ENCODE measurements at regions of chr9 and their contacts with region 1.

Region 1: GRCh38 chr9:95127249-95128176 is 190.0 kb downstream of the FANCC start:
- DNase-seq: peak; percentile 88
- H3K4me3 ChIP-seq: peak overlapping the region; percentile 15 to 21
- H3K27ac ChIP-seq: peak overlapping the region; percentile 64
- H3K4me1 ChIP-seq: peaks cover 13% of the 10 kb centered on the region
- H3K27me3 ChIP-seq: no peaks in the 10 kb centered on the region
- CTCF ChIP-seq: peak; percentile 92 to 98 (median 96)
- POLR2A ChIP-seq: no peak

Region 2: DNA sequence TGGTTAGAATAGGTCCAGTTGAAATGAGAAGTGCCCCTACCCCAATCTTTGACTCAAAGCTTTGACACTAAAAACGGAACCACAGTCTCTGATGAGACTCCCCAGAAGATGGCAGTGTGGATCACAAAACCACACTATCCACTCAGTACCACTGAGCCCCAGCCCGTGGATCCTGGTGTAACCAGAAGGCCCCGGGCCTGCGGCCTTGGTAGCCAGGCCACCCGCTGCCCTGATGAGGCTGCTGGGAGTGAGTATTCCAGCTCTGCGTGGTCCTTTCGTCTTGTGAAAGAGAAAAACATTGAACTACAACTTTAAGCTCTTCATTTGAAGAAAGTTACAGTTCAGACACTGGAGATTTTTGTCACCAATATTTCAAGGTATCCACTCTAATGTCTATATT is 446.0 kb before region 1 on chr9:
- intact Hi-C with region 1: loop called (anchors 2 kb)
- DNase-seq: peak; percentile 70
- H3K4me3 ChIP-seq: no peak overlapping the region
- H3K27ac ChIP-seq: no peak overlapping the region
- H3K4me1 ChIP-seq: no peaks in the 10 kb centered on the region
- H3K27me3 ChIP-seq: no peaks in the 10 kb centered on the region
- CTCF ChIP-seq: peak in 3 of 4 experiments; percentile 72 to 82 (median 80)
- POLR2A ChIP-seq: no peak

Region 3: GRCh38 chr9:94783102-94783664 is 344.3 kb before region 1 on chr9:
- intact Hi-C with region 1: loop called (anchors 5 kb)
- DNase-seq: peak; percentile 96
- H3K4me3 ChIP-seq: no peak overlapping the region
- H3K27ac ChIP-seq: peak overlapping the region; percentile 22 to 23
- H3K4me1 ChIP-seq: no peaks in the 10 kb centered on the region
- H3K27me3 ChIP-seq: no peaks in the 10 kb centered on the region
- CTCF ChIP-seq: peak; percentile 31 to 86 (median 78)
- POLR2A ChIP-seq: no peak

Region 4: DNA sequence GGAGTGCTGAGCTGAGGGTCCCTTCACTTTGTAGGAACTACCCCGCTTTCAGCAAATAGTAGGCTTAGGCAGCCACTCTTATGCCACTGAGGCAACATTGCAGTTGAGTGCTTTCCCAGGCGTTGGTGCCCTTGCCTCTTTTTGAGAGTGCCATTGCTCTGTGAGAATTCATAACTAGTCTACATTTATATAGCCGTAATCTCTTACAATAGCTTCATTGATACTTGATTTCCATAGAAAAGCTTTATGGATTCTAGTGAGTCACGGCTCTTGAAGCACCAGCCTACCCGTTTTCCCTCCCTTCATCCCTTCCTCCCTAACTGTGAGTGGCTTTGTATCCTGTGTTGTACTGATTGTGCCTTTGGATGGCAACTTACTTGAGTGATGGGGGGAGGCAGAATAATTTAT is 117.1 kb before region 1 on chr9:
- intact Hi-C with region 1: loop called (anchors 5 kb)
- DNase-seq: no peak
- H3K4me3 ChIP-seq: no peak overlapping the region
- H3K27ac ChIP-seq: peak overlapping the region; percentile 94 to 96
- H3K4me1 ChIP-seq: peaks cover 3% of the 10 kb centered on the region
- H3K27me3 ChIP-seq: no peaks in the 10 kb centered on the region
- CTCF ChIP-seq: no peak
- POLR2A ChIP-seq: no peak

Region 5: DNA sequence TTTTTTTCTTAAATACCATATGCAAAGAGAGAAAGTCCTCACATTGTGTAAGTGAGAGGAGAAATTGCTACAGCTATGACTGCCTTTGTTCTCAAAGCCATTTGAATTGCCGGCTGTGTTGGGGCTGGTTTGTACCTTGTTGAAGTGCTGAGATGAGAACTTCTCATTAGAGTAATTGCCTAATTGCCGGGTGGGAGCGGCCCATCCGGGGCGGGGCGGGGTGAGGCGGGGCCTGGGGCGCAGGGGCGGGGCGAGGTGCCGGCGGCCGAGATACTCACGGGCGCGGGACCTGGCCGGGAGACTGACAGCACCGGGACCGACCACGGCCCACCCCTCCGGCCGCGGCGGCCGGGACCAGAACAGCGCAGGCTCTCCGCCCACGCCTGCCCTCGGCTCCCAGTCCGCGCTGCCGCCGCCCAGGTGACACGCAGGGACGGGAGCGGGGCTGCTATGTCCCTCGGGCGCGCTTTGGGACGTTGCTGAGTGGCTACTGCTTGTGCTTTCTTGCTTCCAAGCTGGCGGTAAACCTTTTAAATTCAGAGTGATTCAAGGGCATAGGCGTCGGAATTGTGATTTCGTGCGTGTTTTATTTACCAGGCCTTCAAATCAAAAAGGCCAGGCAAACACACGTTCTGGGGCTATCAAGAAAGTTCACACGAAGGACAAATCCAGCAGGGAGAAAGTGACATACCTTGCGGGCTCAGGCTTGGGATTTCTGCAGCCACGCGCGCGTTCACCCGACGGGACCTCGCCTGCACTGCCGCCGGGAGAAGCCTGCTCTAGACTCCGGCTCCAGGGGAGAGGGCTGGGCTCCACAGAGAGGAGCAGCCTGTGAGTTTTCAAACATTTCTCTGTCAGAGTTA is 79.1 kb before region 1 on chr9:
- intact Hi-C with region 1: loop called (anchors 10 kb)
- DNase-seq: peak; percentile 79
- H3K4me3 ChIP-seq: peak overlapping the region; percentile 42 to 47
- H3K27ac ChIP-seq: peak overlapping the region; percentile 86 to 89
- H3K4me1 ChIP-seq: no peaks in the 10 kb centered on the region
- H3K27me3 ChIP-seq: no peaks in the 10 kb centered on the region
- CTCF ChIP-seq: no peak
- POLR2A ChIP-seq: peak; percentile 88

Region 6: GRCh38 chr9:95092262-95093072 is 35.0 kb before region 1 on chr9:
- intact Hi-C with region 1: no loop called
- DNase-seq: no peak
- H3K4me3 ChIP-seq: no peak overlapping the region
- H3K27ac ChIP-seq: peak overlapping the region; percentile 77
- H3K4me1 ChIP-seq: peaks cover 31% of the 10 kb centered on the region
- H3K27me3 ChIP-seq: no peaks in the 10 kb centered on the region
- CTCF ChIP-seq: no peak
- POLR2A ChIP-seq: no peak

Region 7: GRCh38 chr9:95167998-95168397 is 40.5 kb after region 1 on chr9:
- intact Hi-C with region 1: loop called (anchors 5 kb)
- DNase-seq: peak; percentile 40
- H3K4me3 ChIP-seq: no peak overlapping the region
- H3K27ac ChIP-seq: no peak overlapping the region
- H3K4me1 ChIP-seq: no peaks in the 10 kb centered on the region
- H3K27me3 ChIP-seq: no peaks in the 10 kb centered on the region
- CTCF ChIP-seq: peak; percentile 63 to 77 (median 70)
- POLR2A ChIP-seq: no peak

Region 8: DNA sequence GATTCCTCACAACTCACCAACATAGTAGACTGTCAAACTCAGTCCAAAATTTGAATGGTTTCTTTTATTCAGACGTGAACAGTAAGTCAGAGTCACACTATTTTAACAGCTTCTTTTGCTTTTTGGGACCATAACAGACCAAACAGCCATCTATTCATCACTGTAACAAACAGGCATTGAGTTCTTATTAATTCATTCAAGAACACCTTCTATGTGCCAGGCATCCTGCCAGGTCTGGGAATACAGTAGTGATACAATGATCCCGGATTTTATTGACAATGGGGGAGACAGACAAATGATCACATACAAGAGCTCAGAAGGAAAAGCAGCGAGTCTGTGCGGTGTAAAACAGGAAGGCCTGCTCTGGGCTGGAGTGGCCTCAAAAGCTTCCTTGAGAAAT is 594.6 kb after region 1 on chr9:
- intact Hi-C with region 1: no loop called
- DNase-seq: peak; percentile 18
- H3K4me3 ChIP-seq: no peak overlapping the region
- H3K27ac ChIP-seq: peak overlapping the region in 1 of 2 donors; percentile 46
- H3K4me1 ChIP-seq: no peaks in the 10 kb centered on the region
- H3K27me3 ChIP-seq: no peaks in the 10 kb centered on the region
- CTCF ChIP-seq: no peak
- POLR2A ChIP-seq: no peak

Measured in prostate gland (tissue), 2 donors.